Right ventricle myocardium inferior (tissue), 1 donor: ENCODE measurements at regions of chr2 and their contacts with region 1.

Region 1: DNA sequence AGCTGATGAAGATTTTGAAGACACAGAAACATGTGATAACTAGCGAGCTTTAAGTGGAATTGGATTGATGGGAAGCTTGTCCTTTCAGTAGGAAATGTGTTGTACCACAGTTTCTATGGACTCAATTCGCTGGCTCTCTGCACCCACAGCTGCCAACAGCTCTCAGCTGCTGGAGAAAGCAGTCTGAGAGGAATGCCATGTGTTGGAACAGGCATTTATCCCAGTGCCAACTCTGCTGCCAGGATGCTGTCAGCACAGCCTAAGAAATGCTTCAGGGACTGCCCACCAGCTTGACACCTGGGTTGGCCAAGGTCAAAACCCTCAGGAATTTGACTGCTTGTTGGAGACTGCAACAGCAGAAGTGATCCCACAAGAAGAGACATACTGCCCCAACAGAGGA is 193.0 kb upstream of the THSD7B start:
- DNase-seq: peak; percentile 70
- ATAC-seq: peak; percentile 97

Region 2: DNA sequence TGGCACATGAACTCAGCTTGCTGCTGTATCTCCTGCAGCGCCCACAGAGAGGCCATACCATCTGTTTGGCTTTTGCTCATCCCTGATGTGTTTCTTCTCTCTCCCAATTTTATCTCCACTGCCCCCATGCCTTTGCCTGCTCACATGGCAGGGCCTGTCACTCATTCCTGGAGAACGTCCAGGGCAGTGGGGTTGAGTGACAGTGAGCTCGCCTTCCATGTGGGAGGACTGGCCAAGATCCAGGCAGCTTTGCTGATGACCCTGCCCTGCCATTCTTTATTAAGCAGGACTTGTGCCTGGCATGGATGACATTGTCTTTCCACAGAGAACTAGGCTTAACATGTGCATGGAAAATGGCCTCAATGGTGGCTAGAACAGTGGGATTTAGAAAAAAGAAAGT is 37.5 kb before region 1 on chr2:
- intact Hi-C with region 1: loop called (anchors 2 kb)
- DNase-seq: no peak
- ATAC-seq: peak; percentile 76

Region 3: DNA sequence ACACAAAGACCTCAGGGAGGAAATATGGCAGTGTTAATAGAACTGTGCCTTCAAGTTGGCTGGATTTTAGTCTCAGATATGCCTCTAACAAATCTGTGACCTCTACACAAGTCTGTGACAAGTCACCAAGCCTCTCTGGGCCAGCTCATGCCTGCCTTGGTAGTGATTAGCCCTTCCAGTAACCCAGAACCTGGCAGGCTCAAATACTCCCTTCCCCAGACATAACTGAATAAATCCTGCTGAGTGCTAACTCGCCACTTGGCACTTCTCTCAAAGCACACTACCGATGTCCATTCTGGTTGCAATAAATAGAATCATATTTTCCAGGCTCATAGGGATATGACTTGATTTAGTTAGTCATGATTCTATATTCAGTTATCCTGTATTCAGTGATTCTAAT is 177.7 kb after region 1 on chr2:
- intact Hi-C with region 1: loop called (anchors 5 kb)
- DNase-seq: no peak
- ATAC-seq: peak; percentile 95